Ascending aorta (tissue), 2 donors: ENCODE measurements at regions of chr6 and their contacts with region 1.

Region 1: GRCh38 chr6:155248008-155249001 is 15.5 kb upstream of the CLDN20 start:
- DNase-seq: peak in 1 of 2 donors; percentile 79
- H3K4me3 ChIP-seq: peak overlapping the region; percentile 27 to 30
- H3K27ac ChIP-seq: peak overlapping the region; percentile 43 to 76
- H3K4me1 ChIP-seq: peaks cover 0 to 20% of the 10 kb centered on the region in 2 donors
- H3K27me3 ChIP-seq: no peaks in the 10 kb centered on the region
- CTCF ChIP-seq: peak; percentile 62 to 85 (median 67)

Region 2: DNA sequence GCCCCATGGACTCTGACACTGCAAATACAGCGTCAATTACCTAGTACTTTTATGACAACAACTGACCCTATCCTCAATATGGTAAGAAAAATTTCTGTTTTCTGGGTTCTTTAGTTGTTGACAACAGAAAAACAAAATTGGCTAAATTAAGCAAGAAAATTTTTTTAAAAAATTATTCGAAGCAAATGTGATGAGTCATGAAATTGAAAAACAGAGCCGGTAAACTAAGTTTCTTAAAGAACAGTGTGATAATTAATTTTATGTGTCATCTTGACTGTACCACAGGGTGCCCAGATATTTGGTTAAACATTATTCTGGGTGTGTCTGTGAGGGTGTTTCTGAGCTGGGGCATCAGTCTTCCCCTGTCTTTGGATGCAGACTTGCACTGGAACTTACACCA is 1316.9 kb before region 1 on chr6:
- intact Hi-C with region 1: no loop called
- DNase-seq: no peak
- H3K4me3 ChIP-seq: no peak overlapping the region
- H3K27ac ChIP-seq: no peak overlapping the region
- H3K4me1 ChIP-seq: no peaks in the 10 kb centered on the region
- H3K27me3 ChIP-seq: no peaks in the 10 kb centered on the region
- CTCF ChIP-seq: no peak

Region 3: DNA sequence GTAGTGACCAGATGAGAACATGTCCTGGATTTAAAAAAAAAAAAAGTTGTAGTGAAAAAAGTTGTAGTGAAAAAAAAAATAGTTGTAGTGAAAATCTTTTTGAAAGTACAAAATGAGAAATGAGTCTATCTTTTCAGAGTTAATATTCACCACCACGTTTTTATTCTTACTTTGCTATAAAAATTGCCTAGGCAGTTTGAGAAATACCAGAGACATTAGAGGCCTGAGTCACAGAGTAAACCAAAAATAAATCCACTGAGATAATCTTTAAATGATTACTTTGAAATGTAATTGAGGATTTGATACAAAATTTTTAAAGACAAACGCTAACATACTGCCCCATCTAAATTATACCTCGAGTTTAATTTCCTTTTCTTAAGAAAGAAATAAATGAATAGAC is 354.4 kb before region 1 on chr6:
- intact Hi-C with region 1: no loop called
- DNase-seq: no peak
- H3K4me3 ChIP-seq: no peak overlapping the region
- H3K27ac ChIP-seq: no peak overlapping the region
- H3K4me1 ChIP-seq: peaks cover 0 to 8% of the 10 kb centered on the region in 2 donors
- H3K27me3 ChIP-seq: no peaks in the 10 kb centered on the region
- CTCF ChIP-seq: no peak

Region 4: DNA sequence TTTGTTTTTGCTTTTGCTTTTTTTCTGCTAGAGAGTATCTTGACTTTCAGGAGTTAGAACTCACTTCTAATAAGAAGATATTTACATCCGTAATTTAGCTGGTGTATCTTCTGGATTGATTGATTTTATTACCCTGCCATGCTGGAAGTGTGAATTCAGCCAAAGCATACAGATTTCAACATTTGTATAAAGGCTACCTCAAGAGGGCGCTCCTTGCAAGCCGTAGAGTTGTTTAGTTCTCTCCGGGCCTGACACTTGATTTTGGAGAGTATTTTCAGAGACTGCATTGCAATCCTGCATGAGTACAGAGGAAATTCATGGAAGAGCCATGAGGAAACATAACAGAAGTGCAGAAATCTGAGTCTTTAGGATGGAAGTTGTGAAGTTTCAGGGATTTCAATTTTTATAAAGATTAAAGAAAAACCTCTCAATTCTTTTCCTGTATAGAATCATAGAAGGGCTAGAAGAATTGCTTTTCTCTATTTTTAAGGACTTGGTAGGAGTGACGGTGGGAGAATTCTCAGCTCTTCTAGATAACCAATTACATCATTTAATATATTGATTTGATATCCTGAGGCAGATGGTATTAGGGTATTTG is 319.9 kb before region 1 on chr6:
- intact Hi-C with region 1: loop called (anchors 1 kb)
- DNase-seq: peak in 1 of 2 donors; percentile 79
- H3K4me3 ChIP-seq: no peak overlapping the region
- H3K27ac ChIP-seq: no peak overlapping the region
- H3K4me1 ChIP-seq: no peaks in the 10 kb centered on the region
- H3K27me3 ChIP-seq: no peaks in the 10 kb centered on the region
- CTCF ChIP-seq: peak; percentile 66 to 81 (median 68)

Region 5: DNA sequence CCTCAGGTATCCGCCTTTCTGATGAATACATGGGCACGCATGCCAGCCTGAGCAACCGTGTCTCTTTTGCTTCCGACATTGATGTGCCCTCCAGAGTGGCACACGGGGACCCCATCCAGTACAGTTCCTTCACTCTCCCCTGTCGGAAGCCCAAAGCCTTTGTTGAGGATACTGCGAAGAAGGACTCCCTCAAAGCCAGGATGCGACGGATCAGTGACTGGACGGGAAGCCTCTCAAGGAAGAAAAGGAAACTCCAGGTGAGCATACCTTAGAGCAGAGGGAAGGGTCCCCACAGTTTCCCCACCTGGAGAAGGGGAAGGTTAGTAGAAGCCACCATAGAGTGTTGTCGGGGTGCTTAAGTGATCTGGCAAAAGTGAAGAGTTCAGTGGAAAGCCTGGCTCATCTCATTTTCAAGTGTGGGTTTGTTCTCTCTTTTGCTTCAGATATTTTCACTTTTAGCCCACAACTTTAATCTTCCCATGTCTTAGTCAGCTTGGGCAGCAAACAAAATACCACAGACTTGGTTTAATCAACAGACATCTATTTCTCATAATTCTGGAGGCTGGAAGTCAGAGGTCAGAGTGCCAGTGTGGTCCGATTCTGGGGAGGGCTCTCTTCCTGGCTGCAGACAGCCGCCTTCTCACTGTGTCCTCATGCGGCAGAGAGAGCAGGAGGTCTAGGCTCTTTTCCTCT is 118.0 kb before region 1 on chr6:
- intact Hi-C with region 1: no loop called
- DNase-seq: no peak
- H3K4me3 ChIP-seq: no peak overlapping the region
- H3K27ac ChIP-seq: no peak overlapping the region
- H3K4me1 ChIP-seq: no peaks in the 10 kb centered on the region
- H3K27me3 ChIP-seq: no peaks in the 10 kb centered on the region
- CTCF ChIP-seq: no peak